ENCODE measurements at regions of chr2 and their contacts with region 1.

Region 1: DNA sequence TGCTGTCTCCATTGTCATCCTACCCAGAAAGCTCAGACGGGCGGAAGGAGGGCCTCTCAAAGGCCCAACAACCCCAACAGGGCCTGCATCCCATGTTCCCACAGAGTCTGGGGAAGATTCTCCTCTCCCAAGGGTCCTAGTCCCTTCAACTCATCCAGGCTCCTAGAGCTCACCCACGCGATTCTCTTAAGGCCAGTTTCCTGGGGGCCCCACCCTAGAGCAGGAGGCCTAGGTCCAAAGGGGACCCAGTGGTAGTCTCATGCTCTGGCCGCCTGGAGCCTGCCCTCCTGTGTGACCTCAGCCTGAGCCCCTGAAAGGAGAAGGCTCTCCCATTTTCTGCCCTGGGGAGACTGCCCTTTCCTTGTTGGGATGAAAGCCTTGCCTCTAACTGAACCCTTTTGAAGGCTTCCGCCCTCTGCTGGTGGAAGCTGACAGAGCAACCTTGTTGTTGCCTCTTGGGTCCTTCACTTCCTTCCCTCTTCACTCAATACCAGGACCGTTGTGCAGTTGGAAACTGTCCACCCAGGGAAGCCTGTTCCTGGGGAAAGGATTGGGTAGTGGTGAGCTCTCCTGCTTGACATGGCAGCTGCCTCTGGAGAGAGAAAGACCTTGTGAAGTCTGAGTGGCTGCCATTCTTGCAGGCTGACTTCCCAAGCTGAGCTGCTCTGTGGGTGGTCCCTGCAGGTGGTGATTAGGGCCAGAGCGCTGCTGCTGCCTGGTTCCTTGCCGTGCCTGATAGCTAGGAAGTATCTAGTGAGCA is 86.0 kb upstream of the ALPP start:
- DNase-seq: no peak
- H3K4me3 ChIP-seq: no peak overlapping the region
- CTCF ChIP-seq: peak; percentile 65

Region 2: DNA sequence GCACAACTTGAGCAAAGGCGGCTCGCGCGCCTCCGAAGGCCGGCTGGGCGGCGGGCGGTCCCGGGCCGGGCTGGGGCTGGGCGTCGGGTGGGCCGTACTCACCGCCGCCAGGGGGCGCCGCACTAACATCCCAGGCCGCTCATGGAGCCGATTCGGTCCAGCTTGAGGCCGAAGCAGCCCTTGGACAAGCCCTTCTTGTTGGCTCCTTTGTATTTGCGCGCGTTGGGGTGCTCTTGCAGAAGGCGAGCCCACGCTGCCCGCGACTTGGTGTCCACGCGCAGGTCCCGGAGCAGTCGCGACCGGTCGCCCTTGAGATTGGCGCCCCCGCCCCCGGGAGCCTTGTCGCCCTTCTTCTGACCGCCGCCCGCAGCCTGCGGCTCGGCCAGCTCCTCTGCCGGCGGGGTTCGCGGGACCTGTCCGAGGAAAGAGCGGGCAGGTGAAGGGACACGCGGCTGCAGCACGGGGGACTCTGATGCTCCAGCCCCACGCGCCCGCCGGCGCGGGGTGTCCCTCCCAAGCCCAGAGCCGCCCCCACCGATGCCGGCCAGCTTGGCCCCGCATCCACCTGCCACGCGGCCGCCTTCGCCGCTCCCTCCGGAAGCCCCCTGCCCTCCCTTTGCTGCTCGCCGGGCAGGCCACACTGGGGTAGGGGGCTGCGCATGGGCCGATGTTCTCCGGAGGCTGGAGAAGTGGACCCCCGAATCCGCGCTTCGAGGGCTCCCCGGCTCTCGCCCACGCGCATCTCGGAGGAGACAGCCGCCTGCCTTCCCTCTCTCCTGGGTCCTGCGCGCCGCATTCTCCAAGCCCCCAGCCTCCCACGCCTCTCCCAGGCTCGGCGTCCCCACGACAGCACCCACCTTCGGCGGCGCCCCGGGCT is 367.0 kb before region 1 on chr2:
- CTCF ChIA-PET with region 1: interaction called, 19 read pairs
- POLR2A ChIA-PET with region 1: no interaction called
- DNase-seq: peak; percentile 28
- H3K4me3 ChIP-seq: peak overlapping the region; percentile 46
- CTCF ChIP-seq: peak; percentile 87

Region 3: DNA sequence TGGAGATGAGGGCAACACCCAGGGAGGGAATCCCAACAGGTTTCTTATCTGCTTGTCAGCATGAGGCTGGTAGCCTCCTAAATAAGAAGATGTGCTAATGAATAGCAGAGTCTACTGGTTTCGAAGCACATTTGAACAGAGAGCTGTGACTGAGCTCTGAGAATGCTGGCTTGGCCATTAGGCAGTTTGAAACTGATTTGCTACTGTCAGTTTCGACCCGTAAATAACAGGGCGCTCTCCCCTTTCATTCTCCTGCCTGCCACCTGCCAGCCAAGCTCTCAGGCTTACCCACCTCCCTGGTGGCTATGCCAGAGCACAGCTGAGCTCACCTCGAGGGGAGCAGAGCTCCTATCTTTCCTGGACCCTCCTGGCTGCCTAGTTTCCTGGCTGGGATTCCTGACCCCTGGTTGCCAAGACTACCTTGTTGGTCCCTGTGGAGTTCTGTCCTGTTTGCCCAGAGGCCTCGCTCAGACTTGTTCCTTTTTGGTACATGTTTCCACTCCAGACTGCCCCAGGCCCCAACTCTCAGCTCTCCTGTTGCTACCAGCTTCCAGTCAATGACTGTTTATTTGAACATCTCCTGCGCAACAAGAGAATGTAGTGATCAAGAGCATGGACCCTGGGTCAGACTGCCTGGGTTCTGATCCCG is 16.4 kb before region 1 on chr2:
- CTCF ChIA-PET with region 1: interaction called, 27 read pairs
- POLR2A ChIA-PET with region 1: interaction called, 3 read pairs
- DNase-seq: no peak
- H3K4me3 ChIP-seq: no peak overlapping the region
- CTCF ChIP-seq: no peak

Region 4: DNA sequence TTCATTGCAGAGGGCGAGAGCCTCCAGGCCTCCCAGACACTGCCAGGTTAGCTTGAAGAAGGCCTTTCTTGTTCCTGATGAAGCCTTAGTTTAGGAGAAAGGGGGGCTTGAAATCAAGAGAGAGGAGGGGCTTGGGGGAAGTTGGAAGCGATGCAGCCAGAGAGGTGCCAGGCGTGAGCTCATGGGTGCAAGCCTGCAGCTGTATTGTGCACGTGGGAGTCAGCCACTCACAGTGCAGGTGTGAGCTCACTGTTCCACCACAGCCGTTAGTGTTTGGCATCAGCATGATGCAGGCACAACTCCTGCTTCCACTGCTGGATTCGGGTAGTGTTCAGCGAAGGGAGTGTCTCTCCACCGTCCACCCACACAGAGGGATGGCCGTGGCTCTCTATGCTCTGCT is 17.5 kb after region 1 on chr2:
- CTCF ChIA-PET with region 1: interaction called, 40 read pairs
- POLR2A ChIA-PET with region 1: no interaction called
- DNase-seq: no peak
- H3K4me3 ChIP-seq: no peak overlapping the region
- CTCF ChIP-seq: no peak